Activated CD4-positive, alpha-beta T cell treated with anti-CD3 and anti-CD28 coated beads for 36 hours (primary cell): ENCODE measurements at regions of chr4 and their contacts with region 1.

Region 1: GRCh38 chr4:122758033-122758432 is 25.5 kb downstream of the BBS12 start:
- DNase-seq: no peak
- ATAC-seq: peak; percentile 33
- H3K4me3 Mint-ChIP-seq: no peak overlapping the region
- H3K27ac Mint-ChIP-seq: no peak overlapping the region
- H3K4me1 Mint-ChIP-seq: peaks cover 16% of the 10 kb centered on the region
- H3K27me3 Mint-ChIP-seq: peaks cover 12% of the 10 kb centered on the region

Region 2: GRCh38 chr4:122930862-122931261 is 172.8 kb after region 1 on chr4:
- CTCF ChIA-PET with region 1: interaction called, 11 read pairs
- POLR2A ChIA-PET with region 1: no interaction called
- intact Hi-C with region 1: no loop called
- DNase-seq: no peak
- ATAC-seq: no peak
- H3K4me3 Mint-ChIP-seq: no peak overlapping the region
- H3K27ac Mint-ChIP-seq: no peak overlapping the region
- H3K4me1 Mint-ChIP-seq: peaks cover 5% of the 10 kb centered on the region
- H3K27me3 Mint-ChIP-seq: no peaks in the 10 kb centered on the region